ENCODE measurements at regions of chr11 and their contacts with region 1.

Region 1: DNA sequence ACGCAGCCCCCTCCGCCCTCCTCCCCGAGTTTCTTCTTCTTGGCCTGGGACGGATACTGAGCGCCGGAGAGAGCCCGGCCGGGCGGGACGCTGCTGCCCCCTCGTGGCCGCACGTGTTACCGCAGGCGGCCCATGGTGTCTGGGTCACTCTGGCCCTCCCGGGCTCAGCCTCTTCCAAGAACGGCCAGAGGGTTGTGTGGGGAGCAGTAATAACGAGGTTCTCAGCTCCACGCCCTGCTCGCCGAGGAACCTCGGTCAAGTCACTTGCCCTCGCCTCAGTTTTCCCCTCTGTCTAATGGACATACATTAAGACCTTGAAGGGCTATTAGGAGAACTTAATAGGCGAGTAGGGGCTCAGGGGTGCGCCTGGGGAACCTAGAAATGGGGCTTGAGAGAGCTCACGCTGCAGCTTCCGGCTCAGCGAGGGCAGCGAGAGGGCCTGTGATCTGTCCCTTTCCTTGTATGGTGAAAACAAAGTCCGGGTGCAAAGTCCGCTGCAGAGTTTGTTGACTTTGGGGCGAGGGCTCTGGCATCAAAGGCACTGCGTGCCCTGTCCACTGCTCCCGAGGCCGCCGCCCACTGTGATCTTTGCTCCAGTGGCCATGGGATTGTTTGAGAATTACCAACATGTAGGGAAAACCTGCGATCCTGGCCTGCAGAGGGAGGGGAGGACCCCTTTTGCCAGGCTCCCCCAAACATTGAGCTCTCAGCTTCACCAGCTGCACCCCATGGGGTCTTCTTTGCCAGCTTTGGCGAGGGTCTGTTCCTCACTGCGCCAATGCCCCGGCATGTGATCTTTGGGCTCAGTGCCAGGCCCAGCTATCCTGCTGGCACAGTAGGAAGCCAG is 14.4 kb upstream of the LRP5 start:
- DNase-seq: peak; percentile 88 to 92 (median 89)
- ATAC-seq: peak; percentile 100
- H3K4me3 ChIP-seq: no peak overlapping the region
- H3K27ac ChIP-seq: no peak overlapping the region
- H3K4me1 ChIP-seq: peaks cover 6 to 34% of the 10 kb centered on the region in 2 experiments
- H3K27me3 ChIP-seq: no peaks in the 10 kb centered on the region
- CTCF ChIP-seq: peak; percentile 92 to 98 (median 97)
- EP300 ChIP-seq: no peak
- POLR2A ChIP-seq: no peak
- RAD21 ChIP-seq: peak; percentile 98 to 99

Region 2: DNA sequence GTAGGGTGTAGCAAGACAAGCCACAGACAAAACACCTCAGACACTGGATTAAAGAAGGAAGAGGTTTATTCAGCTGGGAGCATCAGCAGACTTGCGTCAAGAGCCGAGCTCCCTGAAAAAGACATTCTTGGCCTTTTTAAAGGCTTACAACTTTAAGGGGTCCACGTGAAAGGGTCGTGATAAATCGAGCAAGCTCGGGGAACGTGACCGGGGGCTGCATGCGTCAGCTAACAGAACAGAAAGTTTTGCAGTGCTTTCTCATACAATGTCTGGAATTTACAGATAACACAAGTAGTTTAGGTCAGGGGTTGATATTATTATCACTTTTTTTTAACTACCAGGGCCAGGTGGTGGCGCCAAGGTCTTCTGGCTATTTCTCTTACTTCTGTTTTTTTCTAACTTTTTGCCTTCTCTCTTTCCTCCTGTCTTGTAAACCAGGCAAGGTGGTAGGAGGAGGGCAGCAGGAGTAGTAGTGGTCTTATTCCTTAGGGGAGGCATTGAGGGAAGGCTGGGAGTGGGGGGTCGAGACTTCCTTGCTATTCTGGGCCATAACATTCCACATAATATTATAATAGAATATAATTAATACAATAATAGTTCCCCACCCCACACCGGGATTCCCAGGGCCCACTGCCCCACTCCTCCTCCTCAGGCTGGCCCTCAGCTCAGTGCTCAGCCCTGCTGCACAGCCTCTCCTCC is 288.5 kb before region 1 on chr11:
- CTCF ChIA-PET with region 1: interaction called, 3 read pairs
- POLR2A ChIA-PET with region 1: no interaction called
- in situ Hi-C with region 1: no loop called
- intact Hi-C with region 1: loop called (anchors 5 kb)
- DNase-seq: peak in 2 of 4 experiments; percentile 37 to 72
- ATAC-seq: peak; percentile 52
- H3K4me3 ChIP-seq: no peak overlapping the region; the same call in 1 of the 2 replicates
- H3K27ac ChIP-seq: peak overlapping the region; percentile 64; the same call in 2 of the 3 replicates
- H3K4me1 ChIP-seq: peaks cover 26 to 60% of the 10 kb centered on the region in 2 experiments
- H3K27me3 ChIP-seq: no peaks in the 10 kb centered on the region
- CTCF ChIP-seq: peak; percentile 27 to 74 (median 36); a peak in 3 of 6 replicates
- EP300 ChIP-seq: peak; percentile 73
- POLR2A ChIP-seq: no peak
- RAD21 ChIP-seq: peak; percentile 63 to 74

Region 3: DNA sequence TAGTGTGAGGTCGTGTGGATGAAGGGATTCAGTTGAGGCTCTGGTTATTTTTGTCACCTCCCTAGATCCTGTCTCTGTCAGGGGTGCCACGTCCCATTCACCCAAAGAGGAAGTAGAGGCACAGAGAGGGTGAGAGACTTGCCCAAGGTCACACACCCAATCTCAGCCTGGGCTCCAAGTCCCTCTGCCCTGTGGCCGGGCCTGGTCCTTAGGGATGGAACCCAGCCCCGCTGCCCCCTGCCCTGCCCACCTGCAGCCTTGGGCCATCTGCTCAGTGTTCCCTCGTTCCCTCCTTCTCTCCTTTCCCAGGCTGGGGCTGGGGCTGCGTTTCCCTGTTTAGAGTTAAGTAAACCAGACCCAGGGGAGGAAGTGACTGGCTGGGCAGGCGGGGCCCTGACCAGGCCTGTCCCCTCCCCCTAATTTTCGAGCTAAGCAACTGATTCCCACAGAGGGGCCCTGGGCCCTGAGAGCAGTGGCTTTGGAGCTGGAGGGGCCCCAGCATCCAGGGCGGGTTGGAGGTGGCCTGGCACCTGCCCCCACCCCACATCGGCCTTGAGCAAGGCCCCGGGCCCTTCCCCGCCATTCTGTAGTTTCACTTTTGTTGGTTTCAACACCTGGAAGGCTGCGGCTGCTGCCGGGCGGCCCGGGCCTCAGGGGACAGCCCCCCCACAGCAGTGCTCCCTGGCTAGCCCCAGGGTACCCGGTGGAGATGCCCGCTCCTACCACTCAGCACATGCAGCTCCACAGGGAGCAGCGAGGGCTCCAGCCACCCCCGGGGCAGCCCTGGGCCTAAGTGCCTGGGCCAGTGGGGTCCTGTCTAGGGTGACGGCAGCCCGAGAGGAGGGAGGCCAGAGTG is 257.7 kb before region 1 on chr11:
- CTCF ChIA-PET with region 1: no interaction called
- POLR2A ChIA-PET with region 1: no interaction called
- in situ Hi-C with region 1: no loop called
- intact Hi-C with region 1: no loop called
- DNase-seq: peak in 3 of 4 experiments; percentile 51 to 71 (median 69)
- ATAC-seq: peak; percentile 48
- H3K4me3 ChIP-seq: peak overlapping the region; percentile 92
- H3K27ac ChIP-seq: peak overlapping the region; percentile 83
- H3K4me1 ChIP-seq: peaks cover 44 to 93% of the 10 kb centered on the region in 2 experiments
- H3K27me3 ChIP-seq: no peaks in the 10 kb centered on the region
- CTCF ChIP-seq: no peak
- EP300 ChIP-seq: no peak
- POLR2A ChIP-seq: peak; percentile 38; the same call in 1 of the 2 replicates
- RAD21 ChIP-seq: no peak

Region 4: DNA sequence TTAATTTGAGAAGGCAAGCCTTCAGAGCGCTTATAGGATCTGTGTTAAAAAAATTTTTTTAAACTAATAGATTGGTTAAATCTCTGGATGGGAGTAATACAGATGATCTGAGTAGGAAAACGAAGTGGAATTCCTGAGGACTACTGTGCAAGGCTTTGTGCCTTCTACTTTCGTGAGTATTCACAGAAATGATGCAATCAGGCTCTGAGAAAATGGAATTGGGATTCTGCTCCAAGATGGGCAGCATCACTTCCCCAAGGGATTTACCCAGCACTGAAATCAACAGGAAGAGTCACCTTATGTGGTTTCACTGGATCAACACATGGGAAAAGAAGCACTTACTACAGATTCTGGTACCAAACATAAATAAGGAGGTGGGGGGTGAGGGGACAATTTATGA is 97.4 kb before region 1 on chr11:
- CTCF ChIA-PET with region 1: no interaction called
- POLR2A ChIA-PET with region 1: no interaction called
- in situ Hi-C with region 1: no loop called
- intact Hi-C with region 1: no loop called
- DNase-seq: no peak
- ATAC-seq: no peak
- H3K4me3 ChIP-seq: no peak overlapping the region
- H3K27ac ChIP-seq: no peak overlapping the region
- H3K4me1 ChIP-seq: no peaks in the 10 kb centered on the region
- H3K27me3 ChIP-seq: no peaks in the 10 kb centered on the region
- CTCF ChIP-seq: no peak
- EP300 ChIP-seq: no peak
- POLR2A ChIP-seq: no peak
- RAD21 ChIP-seq: no peak

Region 5: GRCh38 chr11:68213555-68214174 is 84.4 kb before region 1 on chr11:
- CTCF ChIA-PET with region 1: interaction called, 3 read pairs
- POLR2A ChIA-PET with region 1: interaction called, 4 read pairs
- in situ Hi-C with region 1: no loop called
- intact Hi-C with region 1: loop called (anchors 1 kb)
- DNase-seq: peak; percentile 85 to 92 (median 87)
- ATAC-seq: peak; percentile 62
- H3K4me3 ChIP-seq: peak overlapping the region; percentile 82
- H3K27ac ChIP-seq: peak overlapping the region; percentile 97
- H3K4me1 ChIP-seq: peaks cover 10 to 36% of the 10 kb centered on the region in 2 experiments; a peak in 4 of 5 replicates
- H3K27me3 ChIP-seq: peaks cover 12 to 37% of the 10 kb centered on the region in 2 experiments; a peak in 4 of 5 replicates
- CTCF ChIP-seq: no peak
- EP300 ChIP-seq: no peak
- POLR2A ChIP-seq: peak; percentile 86
- RAD21 ChIP-seq: no peak

Region 6: GRCh38 chr11:68257475-68258362 is 40.3 kb before region 1 on chr11:
- CTCF ChIA-PET with region 1: interaction called, 35 read pairs
- POLR2A ChIA-PET with region 1: interaction called, 19 read pairs
- in situ Hi-C with region 1: loop called (anchors 5 kb)
- intact Hi-C with region 1: loop called (anchors 1 kb)
- DNase-seq: peak; percentile 83 to 90 (median 84)
- ATAC-seq: peak; percentile 84
- H3K4me3 ChIP-seq: no peak overlapping the region
- H3K27ac ChIP-seq: no peak overlapping the region
- H3K4me1 ChIP-seq: peaks cover 9 to 15% of the 10 kb centered on the region in 2 experiments; a peak in 4 of 5 replicates
- H3K27me3 ChIP-seq: no peaks in the 10 kb centered on the region
- CTCF ChIP-seq: peak; percentile 85 to 90 (median 88)
- EP300 ChIP-seq: no peak
- POLR2A ChIP-seq: no peak
- RAD21 ChIP-seq: peak; percentile 97 to 98

Region 7: GRCh38 chr11:68266121-68266891 is 31.7 kb before region 1 on chr11:
- CTCF ChIA-PET with region 1: interaction called, 3 read pairs
- POLR2A ChIA-PET with region 1: interaction called, 25 read pairs
- in situ Hi-C with region 1: no loop called
- intact Hi-C with region 1: no loop called
- DNase-seq: peak in 1 of 4 experiments; percentile 3
- ATAC-seq: no peak
- H3K4me3 ChIP-seq: no peak overlapping the region
- H3K27ac ChIP-seq: peak overlapping the region; percentile 77; the same call in 2 of the 3 replicates
- H3K4me1 ChIP-seq: peaks cover 17 to 34% of the 10 kb centered on the region in 2 experiments
- H3K27me3 ChIP-seq: no peaks in the 10 kb centered on the region
- CTCF ChIP-seq: no peak
- EP300 ChIP-seq: no peak
- POLR2A ChIP-seq: no peak
- RAD21 ChIP-seq: no peak

Region 8: DNA sequence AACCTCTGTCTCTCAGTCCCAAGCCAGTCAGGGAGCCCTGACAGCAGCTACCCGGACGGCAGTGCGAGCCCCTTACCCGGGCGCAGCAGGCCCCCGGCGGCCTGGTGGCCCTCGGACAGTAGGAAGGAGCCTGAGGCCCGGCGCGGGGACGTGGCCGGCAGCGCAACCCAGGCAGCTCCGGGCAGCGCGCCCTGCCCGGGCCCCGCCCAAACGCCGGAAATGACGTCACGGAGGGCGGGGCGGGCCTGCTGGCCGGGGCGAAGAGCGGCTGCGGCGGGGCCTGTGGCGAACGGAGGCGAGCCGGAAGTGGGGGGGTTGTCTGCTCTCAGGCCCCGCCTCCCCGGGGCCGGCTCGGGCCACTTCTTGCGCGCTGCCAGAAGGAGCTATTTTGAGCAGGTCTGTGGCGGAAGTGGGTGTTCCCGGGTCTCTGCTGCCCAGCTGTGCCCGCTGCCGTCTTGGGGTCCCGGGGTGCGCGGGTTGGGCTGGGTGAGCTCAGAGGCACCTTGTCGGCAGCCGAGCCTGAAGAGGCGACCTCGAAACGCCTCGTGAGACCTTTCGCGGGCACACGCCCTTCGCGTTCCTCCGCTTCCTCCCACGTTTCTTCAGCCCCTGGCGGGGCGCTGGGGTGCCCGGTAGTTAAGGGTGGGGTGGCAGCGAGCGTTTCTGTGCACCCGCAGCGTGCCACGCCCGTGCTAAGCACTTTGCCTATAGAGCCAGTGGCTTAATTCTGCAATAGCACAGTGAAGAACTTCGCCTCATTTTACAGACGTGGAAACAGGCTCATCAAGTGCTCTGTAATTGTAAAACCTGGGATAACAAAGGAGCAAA is 26.0 kb before region 1 on chr11 and contains the start of gene C11orf24:
- CTCF ChIA-PET with region 1: interaction called, 3 read pairs
- POLR2A ChIA-PET with region 1: interaction called, 25 read pairs
- in situ Hi-C with region 1: no loop called
- intact Hi-C with region 1: no loop called
- DNase-seq: peak; percentile 95 to 99 (median 98)
- ATAC-seq: peak; percentile 88
- H3K4me3 ChIP-seq: peak within 1 kb of the TSS; percentile 90
- H3K27ac ChIP-seq: peak within 1 kb of the TSS; percentile 97
- H3K4me1 ChIP-seq: peaks cover 22 to 39% of the 10 kb centered on the region in 2 experiments
- H3K27me3 ChIP-seq: no peaks in the 10 kb centered on the region
- CTCF ChIP-seq: no peak
- EP300 ChIP-seq: peak; percentile 25; the same call in 1 of the 2 replicates
- POLR2A ChIP-seq: peak; percentile 95
- RAD21 ChIP-seq: no peak
- polyA plus RNA-seq, gene C11orf24: 2.0 to 4.4 TPM

Region 9: DNA sequence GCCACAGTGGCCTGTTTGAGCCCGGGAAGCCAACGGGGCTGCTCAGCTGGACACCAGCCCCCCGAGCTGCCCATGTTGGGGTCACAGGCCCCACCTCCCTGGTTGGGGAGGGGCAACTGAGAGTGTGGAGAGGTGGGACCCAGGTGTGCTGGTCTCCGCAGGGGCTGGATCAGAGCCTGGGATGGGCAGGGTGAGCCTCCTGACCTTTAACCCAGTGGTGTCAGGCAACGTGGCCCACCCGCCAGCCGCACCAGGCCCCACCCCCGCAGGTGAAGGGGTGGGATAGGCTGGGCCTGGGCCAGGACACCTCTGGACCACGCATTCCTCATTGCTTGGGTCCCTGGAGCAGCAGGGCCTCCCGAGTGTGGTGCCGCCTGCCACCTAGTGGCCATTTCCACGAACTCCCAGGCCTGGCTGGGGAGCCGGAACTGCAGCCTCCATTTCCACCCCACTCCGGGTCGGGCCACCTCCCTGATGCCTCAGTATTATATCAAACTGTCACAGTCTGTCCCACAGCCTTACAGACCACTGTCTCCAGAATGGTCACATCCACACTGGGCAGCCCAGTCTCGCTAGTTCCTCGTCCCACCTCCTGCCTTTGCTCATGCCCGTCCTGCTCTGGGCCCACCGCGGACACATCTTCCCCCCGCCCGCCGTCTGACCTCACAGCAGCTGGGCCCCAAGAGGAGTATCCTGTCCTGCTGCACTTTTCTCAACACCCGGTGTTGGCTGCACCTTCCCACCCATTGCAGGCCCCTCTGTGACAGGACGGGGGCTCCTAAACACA is 149.2 kb after region 1 on chr11:
- CTCF ChIA-PET with region 1: no interaction called
- POLR2A ChIA-PET with region 1: no interaction called
- in situ Hi-C with region 1: no loop called
- intact Hi-C with region 1: loop called (anchors 5 kb)
- DNase-seq: peak; percentile 82 to 87 (median 84)
- ATAC-seq: peak; percentile 99
- H3K4me3 ChIP-seq: no peak overlapping the region
- H3K27ac ChIP-seq: no peak overlapping the region
- H3K4me1 ChIP-seq: peaks cover 0 to 19% of the 10 kb centered on the region in 2 experiments; a peak in 2 of 5 replicates
- H3K27me3 ChIP-seq: no peaks in the 10 kb centered on the region
- CTCF ChIP-seq: peak; percentile 85 to 92 (median 87)
- EP300 ChIP-seq: no peak
- POLR2A ChIP-seq: no peak
- RAD21 ChIP-seq: peak; percentile 54 to 79

Measured in K562 (cell line).